ENCODE measurements at regions of chr17 and their contacts with region 1.

Region 1: GRCh38 chr17:13194887-13195286 is 177.1 kb upstream of the ELAC2 start:
- DNase-seq: no peak
- ATAC-seq: no peak
- H3K4me3 ChIP-seq: no peak overlapping the region
- H3K27ac ChIP-seq: no peak overlapping the region
- H3K4me1 ChIP-seq: no peaks in the 10 kb centered on the region
- H3K27me3 ChIP-seq: no peaks in the 10 kb centered on the region
- CTCF ChIP-seq: no peak

Region 2: GRCh38 chr17:12859520-12859919 is 335.4 kb before region 1 on chr17:
- intact Hi-C with region 1: loop called in 1 of 2 experiments (anchors 10 kb)
- DNase-seq: no peak
- ATAC-seq: peak in 2 of 4 donors; percentile 27 to 47
- H3K4me3 ChIP-seq: no peak overlapping the region
- H3K27ac ChIP-seq: no peak overlapping the region
- H3K4me1 ChIP-seq: no peaks in the 10 kb centered on the region
- H3K27me3 ChIP-seq: no peaks in the 10 kb centered on the region
- CTCF ChIP-seq: no peak

Region 3: GRCh38 chr17:12940699-12941098 is 254.2 kb before region 1 on chr17:
- intact Hi-C with region 1: no loop called
- DNase-seq: no peak
- ATAC-seq: no peak
- H3K4me3 ChIP-seq: no peak overlapping the region
- H3K27ac ChIP-seq: no peak overlapping the region
- H3K4me1 ChIP-seq: no peaks in the 10 kb centered on the region
- H3K27me3 ChIP-seq: peaks cover 0 to 3% (median 0%) of the 10 kb centered on the region in 3 donors
- CTCF ChIP-seq: no peak

Region 4: DNA sequence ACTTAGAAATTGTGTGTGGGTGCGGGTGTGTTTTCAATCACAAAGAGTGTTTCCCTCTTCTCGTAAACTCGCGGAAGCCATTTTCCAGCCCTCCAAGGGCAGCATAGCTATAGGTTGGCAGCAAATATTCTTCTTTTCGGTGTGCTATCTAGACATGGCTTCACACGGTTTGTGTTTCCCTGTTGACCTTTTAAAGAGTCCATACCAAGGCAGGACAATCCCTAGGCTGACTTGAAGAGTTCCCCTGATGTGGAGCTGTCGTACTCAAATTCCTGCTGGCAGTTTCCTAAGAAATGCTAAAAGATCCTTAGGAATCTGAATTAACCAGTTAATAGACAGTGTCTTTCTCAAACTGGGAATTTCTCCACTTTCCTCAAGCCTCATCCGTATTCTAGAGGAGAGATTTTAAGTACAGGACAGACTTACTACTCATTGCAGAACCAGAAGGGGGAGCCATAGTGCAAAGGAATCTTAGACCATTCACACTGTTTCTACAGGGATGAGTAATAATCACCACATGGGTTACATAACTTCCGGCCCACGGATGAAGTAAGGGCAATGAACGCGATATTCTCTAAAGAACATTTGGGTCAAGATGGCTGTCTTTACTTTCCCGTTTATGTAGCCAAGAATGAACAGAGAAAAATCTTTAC is 111.5 kb after region 1 on chr17:
- intact Hi-C with region 1: no loop called
- DNase-seq: no peak
- ATAC-seq: no peak
- H3K4me3 ChIP-seq: no peak overlapping the region
- H3K27ac ChIP-seq: no peak overlapping the region
- H3K4me1 ChIP-seq: no peaks in the 10 kb centered on the region
- H3K27me3 ChIP-seq: no peaks in the 10 kb centered on the region
- CTCF ChIP-seq: no peak

Measured in psoas muscle (tissue), 8 donors.